Activated CD4-positive, alpha-beta T cell treated with anti-CD3 and anti-CD28 coated beads, Interleukin-2, amount 10 ng/mL, durations not matched to agents 7 days and 5 days (primary cell): ENCODE measurements at regions of chr7 and their contacts with region 1.

Region 1: DNA sequence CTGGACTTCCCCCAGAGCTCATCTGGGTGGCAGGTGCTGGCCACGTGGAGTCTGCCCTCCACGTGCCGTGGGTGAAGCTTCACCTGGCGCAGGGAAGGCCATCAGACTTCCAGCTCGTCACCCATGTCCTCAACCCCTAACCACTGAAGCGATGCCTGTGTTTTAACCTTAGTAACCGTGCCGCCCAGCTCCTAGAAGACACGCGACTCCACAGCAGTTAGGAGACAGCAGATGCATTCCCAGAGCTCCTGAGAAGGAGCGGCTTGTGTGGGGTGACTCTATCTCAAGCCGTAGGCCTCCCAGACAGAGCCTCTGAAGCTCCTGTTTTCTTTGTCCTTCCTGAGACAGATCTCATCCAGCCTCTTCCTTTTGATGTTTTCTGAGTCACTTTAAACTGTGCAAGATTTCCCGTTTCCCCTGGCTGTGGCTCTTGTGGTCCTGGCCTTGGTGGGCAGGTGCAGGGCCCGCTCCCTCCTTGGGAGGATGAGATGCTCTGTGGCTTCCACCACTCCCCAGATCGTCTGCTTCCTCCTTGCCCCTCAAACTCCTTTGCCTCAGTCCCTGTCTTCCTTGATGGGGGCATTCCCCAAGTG is 41.4 kb upstream of the AP5Z1 start:
- DNase-seq: peak; percentile 52
- H3K4me3 Mint-ChIP-seq: peak overlapping the region; percentile 40
- H3K27ac Mint-ChIP-seq: peak overlapping the region; percentile 80
- H3K4me1 Mint-ChIP-seq: peaks cover 75% of the 10 kb centered on the region
- H3K27me3 Mint-ChIP-seq: no peaks in the 10 kb centered on the region

Region 2: DNA sequence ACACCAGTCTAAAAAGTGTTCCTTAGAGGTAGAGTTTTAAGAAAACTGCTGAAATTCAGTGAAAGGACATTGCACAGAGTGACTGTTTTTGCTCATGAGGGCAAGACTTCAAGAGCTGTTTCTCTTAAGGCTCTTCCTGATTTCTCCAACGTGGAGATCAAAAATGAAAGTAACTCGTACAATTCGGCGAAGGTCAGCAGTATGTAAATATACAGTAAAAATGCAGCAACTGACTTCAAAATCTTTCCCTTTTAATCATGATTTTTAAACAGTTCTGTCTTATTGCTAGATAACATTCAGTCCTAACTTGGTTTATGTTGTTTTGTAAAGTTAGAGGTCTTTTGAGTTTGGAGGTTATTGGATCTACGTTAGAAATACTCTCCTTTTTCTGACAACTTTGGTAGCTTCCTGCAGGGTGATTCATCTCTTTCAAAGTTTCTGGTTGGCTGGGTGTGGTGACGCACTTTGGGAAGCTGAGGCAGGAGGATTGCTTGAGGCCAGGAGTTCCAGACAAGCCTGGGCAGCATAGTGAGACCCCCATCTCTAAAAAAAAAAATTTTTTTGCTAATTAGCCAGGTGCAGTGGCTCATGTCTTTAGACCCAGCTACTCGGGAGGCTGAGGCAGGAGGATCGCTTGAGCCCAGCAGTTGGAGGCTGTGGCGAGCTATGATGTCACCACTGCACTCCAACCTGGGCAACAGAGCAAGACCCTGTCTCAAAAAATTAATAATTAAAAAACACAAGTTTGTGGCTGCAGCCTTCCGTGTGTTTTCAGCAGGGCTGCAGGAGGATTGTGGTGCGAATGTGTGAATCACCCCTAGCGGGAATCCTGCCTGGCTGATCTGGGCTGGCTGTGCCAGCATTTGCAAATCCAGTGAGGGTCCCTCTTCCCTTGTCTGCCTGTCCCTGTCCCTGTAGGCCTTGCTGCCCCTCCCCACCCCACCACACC is 12.2 kb after region 1 on chr7:
- CTCF ChIA-PET with region 1: interaction called, 11 read pairs
- POLR2A ChIA-PET with region 1: no interaction called
- DNase-seq: peak; percentile 42
- H3K4me3 Mint-ChIP-seq: peak overlapping the region; percentile 78
- H3K27ac Mint-ChIP-seq: peak overlapping the region; percentile 98
- H3K4me1 Mint-ChIP-seq: peaks cover 73% of the 10 kb centered on the region
- H3K27me3 Mint-ChIP-seq: no peaks in the 10 kb centered on the region